Endothelial cell of umbilical vein (primary cell): ENCODE measurements at regions of chr6 and their contacts with region 1.

Region 1: DNA sequence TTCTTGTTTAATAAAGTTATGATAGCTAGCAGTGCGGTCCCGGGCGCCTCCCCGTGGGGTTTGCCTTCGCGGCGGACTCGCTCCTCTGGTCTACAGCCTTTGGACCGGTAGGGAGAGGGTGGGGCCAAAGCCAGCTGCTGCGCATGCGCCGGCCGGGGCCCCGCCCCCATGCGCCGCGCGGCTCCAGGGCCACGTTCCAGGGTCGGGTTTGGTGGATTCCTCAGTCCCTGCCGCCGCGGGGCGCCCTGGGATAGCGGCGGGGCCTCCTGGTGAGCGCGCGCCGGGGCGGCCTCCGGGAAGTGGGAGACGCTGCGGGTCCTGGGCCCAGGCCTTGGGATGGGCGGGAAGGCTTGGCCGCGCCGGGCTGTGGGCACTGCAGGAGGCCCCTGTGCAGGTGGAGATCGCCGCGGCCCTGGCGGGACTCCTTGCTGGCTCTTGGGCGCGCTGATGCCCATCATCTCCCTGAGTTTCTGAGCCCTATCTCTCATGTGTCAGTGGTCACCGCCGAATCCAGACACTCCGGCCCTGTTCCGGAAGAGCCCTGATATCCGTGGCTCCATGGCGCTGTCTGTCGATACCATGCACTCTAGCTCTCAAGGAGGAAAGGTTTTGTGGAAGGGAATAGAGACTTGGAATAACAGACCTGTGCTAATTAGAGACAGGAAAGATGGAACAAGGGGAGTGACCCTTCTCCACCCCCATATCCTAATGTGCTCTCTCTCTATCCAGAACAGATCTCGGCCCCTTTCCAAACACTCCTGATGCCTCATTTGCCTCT is at the start of gene VARS2:
- DNase-seq: peak; percentile 95
- H3K4me3 ChIP-seq: peak within 1 kb of the TSS; percentile 37 to 54 (median 44)
- H3K27ac ChIP-seq: peak within 1 kb of the TSS; percentile 67
- H3K4me1 ChIP-seq: peaks cover 25% of the 10 kb centered on the region
- H3K27me3 ChIP-seq: no peaks in the 10 kb centered on the region
- CTCF ChIP-seq: peak in 1 of 2 donors; percentile 41
- POLR2A ChIP-seq: peak; percentile 91
- total RNA-seq, gene VARS2: 32.5 and 34.3 TPM in 2 replicates

Region 2: GRCh38 chr6:30238174-30238795 is 676.0 kb before region 1 on chr6:
- CTCF ChIA-PET with region 1: no interaction called
- POLR2A ChIA-PET with region 1: no interaction called
- dilution Hi-C with region 1: no loop called
- intact Hi-C with region 1: no loop called
- DNase-seq: no peak
- H3K4me3 ChIP-seq: no peak overlapping the region
- H3K27ac ChIP-seq: no peak overlapping the region
- H3K4me1 ChIP-seq: no peaks in the 10 kb centered on the region
- H3K27me3 ChIP-seq: peaks cover 7 to 17% of the 10 kb centered on the region in 2 experiments
- CTCF ChIP-seq: peak in 1 of 2 donors; percentile 34
- POLR2A ChIP-seq: no peak

Region 3: GRCh38 chr6:30828027-30828960 is 86.0 kb before region 1 on chr6:
- CTCF ChIA-PET with region 1: interaction called, 72 read pairs
- POLR2A ChIA-PET with region 1: interaction called, 3 read pairs
- dilution Hi-C with region 1: no loop called
- intact Hi-C with region 1: loop called (anchors 1 kb)
- DNase-seq: peak; percentile 92
- H3K4me3 ChIP-seq: no peak overlapping the region
- H3K27ac ChIP-seq: no peak overlapping the region
- H3K4me1 ChIP-seq: peaks cover 15% of the 10 kb centered on the region
- H3K27me3 ChIP-seq: no peaks in the 10 kb centered on the region
- CTCF ChIP-seq: peak; percentile 89
- POLR2A ChIP-seq: no peak

Region 4: DNA sequence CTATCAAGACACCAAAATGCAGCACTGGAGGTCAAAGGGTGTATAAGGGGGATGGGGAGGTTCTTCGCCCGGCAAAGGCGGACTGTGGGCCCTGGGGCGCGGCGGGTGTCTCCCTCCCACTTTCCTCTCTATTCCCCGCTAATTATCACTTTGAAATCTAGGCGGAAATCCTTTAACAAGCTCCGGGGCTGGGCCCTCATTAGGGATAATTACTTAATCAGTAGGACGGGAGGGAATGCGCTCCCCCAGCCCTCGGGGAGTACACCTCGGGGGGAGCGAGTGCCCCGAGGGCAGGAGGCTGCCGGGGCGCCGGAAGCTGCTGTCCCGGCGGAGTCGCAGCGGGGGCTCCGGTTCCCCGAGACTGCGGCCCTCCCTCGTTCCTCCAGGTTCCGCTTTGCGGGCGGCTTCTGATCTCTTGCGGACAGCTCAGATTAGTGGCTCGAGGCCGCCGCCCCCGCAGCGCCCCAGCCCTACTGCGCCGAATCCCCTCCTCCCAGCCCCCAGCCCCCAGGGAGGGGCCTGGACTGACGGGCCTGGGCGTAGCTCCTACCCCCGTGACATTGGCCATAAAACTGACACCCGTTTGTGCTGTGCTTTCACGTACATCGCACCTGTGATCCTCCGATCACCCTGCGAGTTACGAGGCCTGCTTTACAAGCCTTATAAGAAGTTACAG is 41.2 kb after region 1 on chr6:
- CTCF ChIA-PET with region 1: no interaction called
- POLR2A ChIA-PET with region 1: no interaction called
- dilution Hi-C with region 1: no loop called
- intact Hi-C with region 1: no loop called
- DNase-seq: no peak
- H3K4me3 ChIP-seq: peak overlapping the region in 2 of 3 experiments; percentile 22 to 45
- H3K27ac ChIP-seq: no peak overlapping the region
- H3K4me1 ChIP-seq: peaks cover 5% of the 10 kb centered on the region
- H3K27me3 ChIP-seq: peaks cover 50 to 53% of the 10 kb centered on the region in 2 experiments
- CTCF ChIP-seq: no peak
- POLR2A ChIP-seq: no peak

Region 5: GRCh38 chr6:31068669-31069340 is 154.5 kb after region 1 on chr6:
- CTCF ChIA-PET with region 1: interaction called, 87 read pairs
- POLR2A ChIA-PET with region 1: no interaction called
- dilution Hi-C with region 1: no loop called
- intact Hi-C with region 1: loop called (anchors 1 kb)
- DNase-seq: peak; percentile 73
- H3K4me3 ChIP-seq: no peak overlapping the region
- H3K27ac ChIP-seq: no peak overlapping the region
- H3K4me1 ChIP-seq: peaks cover 6% of the 10 kb centered on the region
- H3K27me3 ChIP-seq: peaks cover 5 to 8% of the 10 kb centered on the region in 2 experiments
- CTCF ChIP-seq: peak; percentile 82 to 91
- POLR2A ChIP-seq: no peak

Region 6: GRCh38 chr6:31122791-31123706 is 208.8 kb after region 1 on chr6:
- CTCF ChIA-PET with region 1: interaction called, 26 read pairs
- POLR2A ChIA-PET with region 1: no interaction called
- dilution Hi-C with region 1: no loop called
- intact Hi-C with region 1: loop called (anchors 1 kb)
- DNase-seq: peak; percentile 91
- H3K4me3 ChIP-seq: no peak overlapping the region
- H3K27ac ChIP-seq: peak overlapping the region; percentile 90
- H3K4me1 ChIP-seq: peaks cover 36% of the 10 kb centered on the region
- H3K27me3 ChIP-seq: no peaks in the 10 kb centered on the region
- CTCF ChIP-seq: no peak
- POLR2A ChIP-seq: no peak